ENCODE measurements at regions of chr3 and their contacts with region 1.

Region 1: DNA sequence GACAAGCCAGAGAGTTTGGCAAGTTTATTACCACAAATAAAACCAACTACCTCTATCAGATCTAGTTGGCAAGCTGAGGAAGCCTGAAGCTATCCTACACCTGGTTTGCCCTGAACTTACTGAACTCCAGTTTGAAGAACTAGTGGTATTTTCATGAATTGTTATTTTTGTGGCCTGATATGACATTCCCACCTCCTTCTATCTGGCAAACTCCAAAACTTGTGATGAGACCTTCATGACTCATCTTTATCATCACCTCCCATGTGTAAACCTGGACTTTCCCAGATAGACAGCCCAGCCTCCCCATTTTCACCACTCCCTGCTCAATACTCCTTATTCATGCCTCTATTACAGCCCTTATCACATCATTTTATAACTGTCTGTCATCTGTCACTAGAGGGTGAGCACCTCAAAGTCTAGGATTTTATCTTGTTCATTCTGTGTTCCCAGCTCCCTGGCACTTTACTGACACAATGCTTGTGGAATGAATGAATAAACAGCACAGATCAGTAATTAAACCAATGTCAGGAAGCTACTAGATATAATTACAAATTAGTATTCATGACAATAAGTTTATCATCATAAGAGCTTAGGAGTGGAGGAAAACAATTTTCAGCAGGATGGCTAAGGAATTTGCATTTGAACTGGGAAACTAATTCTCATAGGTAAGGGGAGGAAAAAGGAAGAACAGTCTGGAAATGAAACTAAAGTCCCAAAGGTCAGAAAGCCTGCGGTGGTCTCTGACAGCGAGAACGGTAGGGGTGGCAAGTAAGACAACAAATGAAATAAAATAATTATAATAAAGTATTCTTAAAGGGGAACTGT is 13.2 kb upstream of the TRANK1 start:
- DNase-seq: peak; percentile 18
- H3K4me3 Mint-ChIP-seq: no peak overlapping the region
- H3K27ac Mint-ChIP-seq: no peak overlapping the region
- H3K4me1 Mint-ChIP-seq: peaks cover 10% of the 10 kb centered on the region
- H3K27me3 Mint-ChIP-seq: no peaks in the 10 kb centered on the region

Region 2: DNA sequence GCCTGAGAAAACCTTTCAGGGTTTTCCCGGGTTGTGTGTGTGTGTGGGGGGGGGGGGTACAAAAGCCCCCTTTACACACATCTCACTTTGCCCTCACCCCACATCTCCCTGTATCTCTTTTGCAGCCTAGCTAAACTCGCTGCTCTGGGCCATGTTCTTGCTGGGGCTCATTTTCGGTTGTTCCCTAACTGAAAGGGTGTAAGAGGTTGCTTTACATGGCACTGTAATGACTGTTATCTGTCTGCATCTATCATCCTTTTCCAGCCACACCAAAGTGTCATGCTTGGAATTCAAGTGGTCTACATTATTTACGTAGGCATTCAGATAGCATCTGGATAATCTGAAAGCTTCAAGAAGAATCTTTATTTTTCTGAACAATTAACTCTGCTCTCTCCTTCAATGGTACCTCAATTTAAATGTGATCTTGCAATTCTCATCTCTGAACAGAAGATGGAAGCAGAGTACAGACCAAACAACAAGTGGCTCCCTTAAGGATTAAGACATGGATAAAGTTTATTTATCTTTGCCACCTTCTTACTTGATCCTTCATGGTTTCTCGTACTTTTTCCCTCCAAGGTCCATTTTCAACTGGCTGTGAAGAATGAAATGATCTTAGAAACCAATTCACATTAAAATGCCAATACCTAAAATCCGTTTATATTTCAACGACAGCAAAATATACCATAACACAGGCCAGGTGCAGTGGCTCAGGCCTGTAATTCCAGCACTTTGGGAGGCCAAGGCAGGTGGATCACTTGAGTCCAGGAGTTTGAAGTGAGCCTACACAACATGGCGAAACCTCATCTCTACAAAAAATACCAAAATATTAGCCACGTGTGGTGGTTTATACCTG is 228.6 kb before region 1 on chr3:
- CTCF ChIA-PET with region 1: interaction called, 13 read pairs
- POLR2A ChIA-PET with region 1: no interaction called
- intact Hi-C with region 1: loop called (anchors 1 kb)
- DNase-seq: no peak
- H3K4me3 Mint-ChIP-seq: no peak overlapping the region
- H3K27ac Mint-ChIP-seq: no peak overlapping the region
- H3K4me1 Mint-ChIP-seq: no peaks in the 10 kb centered on the region
- H3K27me3 Mint-ChIP-seq: peaks cover 6% of the 10 kb centered on the region

Region 3: DNA sequence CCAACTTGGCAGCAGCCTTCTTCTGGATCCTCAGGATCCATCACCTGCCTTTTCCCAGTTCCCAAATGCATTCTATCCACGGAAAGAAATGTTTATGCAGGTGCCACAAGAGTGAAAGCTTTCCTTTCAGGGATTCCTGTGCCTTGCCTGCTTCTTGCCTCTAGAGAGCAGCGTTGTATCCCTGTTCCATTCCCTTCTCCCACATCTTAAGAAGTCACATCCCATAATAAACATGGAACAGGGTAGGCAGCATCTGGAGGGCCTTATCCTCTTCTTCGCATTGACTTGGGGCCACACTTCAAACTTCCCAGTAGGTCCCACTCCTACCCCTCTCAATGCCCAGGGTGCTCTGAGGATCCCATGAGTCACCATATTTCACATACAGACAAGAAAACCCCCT is 121.0 kb before region 1 on chr3:
- CTCF ChIA-PET with region 1: interaction called, 19 read pairs
- POLR2A ChIA-PET with region 1: no interaction called
- intact Hi-C with region 1: loop called (anchors 2 kb)
- DNase-seq: no peak
- H3K4me3 Mint-ChIP-seq: no peak overlapping the region
- H3K27ac Mint-ChIP-seq: no peak overlapping the region
- H3K4me1 Mint-ChIP-seq: peaks cover 2% of the 10 kb centered on the region
- H3K27me3 Mint-ChIP-seq: no peaks in the 10 kb centered on the region

Region 4: DNA sequence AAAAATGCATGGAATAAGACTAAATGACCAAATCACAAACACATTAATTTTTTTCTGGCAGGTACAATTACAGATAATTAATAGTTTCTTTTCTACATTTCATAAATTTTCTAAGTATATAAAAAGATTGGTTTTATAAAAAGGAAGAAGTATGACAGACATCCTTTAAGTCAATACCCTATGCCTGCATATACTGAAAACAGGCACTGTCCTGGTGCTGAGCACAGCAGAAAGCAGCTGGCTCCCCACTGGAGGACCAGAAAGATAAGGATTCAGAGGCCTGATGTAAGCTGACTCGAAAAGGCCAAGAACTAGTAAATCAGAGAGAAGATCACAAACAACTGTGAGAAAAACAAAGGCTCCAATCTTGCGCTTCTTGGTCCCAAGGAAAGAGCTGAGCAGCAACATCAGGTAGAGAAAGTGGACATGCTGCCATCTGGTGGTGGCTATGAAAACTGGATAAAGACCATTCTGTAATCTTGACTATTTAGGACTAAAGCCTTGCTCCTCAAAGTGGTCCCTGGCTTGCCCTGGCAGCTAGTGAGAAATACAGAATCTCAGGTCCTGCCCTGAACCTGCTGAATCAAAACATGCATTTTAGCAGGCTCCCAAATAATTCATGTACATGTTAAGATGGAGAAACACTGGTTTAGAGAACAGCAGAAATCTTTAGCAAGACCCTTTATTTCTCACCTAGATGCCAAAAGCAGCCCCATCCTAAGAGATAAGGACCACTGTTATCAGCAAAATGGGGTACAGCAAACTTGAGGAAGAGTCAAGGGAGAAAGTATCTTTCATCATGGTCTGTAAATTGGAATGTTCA is 89.2 kb before region 1 on chr3:
- CTCF ChIA-PET with region 1: interaction called, 34 read pairs
- POLR2A ChIA-PET with region 1: no interaction called
- intact Hi-C with region 1: loop called (anchors 1 kb)
- DNase-seq: peak; percentile 60
- H3K4me3 Mint-ChIP-seq: no peak overlapping the region
- H3K27ac Mint-ChIP-seq: no peak overlapping the region
- H3K4me1 Mint-ChIP-seq: peaks cover 23% of the 10 kb centered on the region
- H3K27me3 Mint-ChIP-seq: no peaks in the 10 kb centered on the region

Region 5: DNA sequence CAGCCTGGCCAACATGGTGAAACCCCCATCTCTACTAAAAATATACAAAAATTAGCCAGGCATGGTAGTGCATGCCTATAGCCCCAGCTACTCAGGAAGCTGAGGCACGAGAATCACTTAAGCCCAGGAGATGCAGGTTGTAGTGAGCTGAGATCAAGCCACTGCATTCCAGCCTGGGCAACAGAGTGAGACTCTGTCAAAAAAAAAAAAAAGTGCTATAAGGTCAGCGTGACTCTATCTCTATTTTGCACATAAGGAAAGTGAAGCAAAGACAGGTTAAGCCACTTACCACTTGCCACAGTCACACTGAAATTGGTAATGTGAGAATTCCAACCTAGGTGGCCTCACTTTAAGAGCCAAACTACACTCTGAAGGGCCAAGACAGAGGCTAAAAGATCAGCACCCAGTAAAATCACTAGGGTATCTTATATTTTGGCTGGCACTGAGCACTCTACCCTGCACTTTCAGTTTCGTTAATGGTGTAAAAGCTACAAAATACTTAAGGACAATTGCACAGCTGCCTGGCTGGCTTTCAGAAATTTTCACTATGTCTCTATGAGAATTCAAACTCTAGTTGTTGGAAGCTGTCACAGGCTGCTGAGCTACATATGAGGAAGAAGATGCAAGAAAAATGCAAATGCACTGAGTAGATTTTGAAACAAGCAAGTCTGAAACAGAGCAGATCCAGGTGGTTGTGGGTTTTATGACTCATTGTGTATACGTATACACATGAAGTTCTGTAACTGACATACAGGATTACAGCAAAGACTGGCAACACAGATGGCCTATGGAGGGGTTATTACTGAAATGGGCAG is 45.9 kb before region 1 on chr3:
- CTCF ChIA-PET with region 1: interaction called, 69 read pairs
- POLR2A ChIA-PET with region 1: no interaction called
- intact Hi-C with region 1: loop called (anchors 1 kb)
- DNase-seq: peak; percentile 47
- H3K4me3 Mint-ChIP-seq: peak overlapping the region; percentile 59
- H3K27ac Mint-ChIP-seq: peak overlapping the region; percentile 81
- H3K4me1 Mint-ChIP-seq: peaks cover 41% of the 10 kb centered on the region
- H3K27me3 Mint-ChIP-seq: no peaks in the 10 kb centered on the region

Region 6: DNA sequence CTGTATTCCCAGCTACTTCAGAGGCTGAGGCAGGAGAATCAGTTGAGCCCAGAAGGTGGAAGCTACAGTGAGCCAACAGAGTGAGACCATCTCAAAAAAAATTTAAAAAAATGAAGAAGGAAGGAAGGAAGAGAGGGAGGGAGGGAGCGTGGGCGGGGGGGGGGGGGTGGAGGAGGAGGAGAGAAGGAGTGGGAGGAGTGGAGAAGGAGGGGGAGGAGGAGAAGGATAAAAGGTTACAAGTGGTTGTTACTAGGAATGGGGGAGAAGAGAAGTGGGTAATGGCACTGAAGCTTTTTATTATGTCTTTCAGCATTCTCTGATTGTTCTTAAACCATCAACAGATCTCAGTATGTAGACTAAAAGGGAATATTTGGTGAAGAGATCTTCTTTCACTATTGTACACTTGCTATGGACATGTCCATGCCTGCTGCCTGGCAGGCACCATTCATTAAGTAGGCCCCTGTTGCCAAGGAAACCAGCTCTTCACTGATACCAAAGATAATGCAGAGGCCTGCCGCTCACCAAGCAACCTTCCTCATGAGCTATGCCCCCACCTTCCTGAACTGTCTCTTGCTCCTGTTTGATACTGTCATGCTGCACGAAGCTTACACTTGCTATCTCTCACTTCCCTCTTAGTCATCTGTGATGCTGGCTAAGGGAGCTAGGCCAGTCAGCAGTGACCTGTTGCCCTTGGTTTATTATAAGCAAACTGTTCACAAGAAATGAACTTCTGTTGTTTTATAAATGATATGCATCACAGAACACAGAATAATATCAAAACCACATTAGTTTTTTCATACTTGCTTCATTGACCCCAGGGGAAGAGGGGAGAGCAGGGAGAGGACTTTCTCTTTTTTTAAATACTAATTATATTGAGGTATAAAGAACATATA is 11.7 kb after region 1 on chr3:
- CTCF ChIA-PET with region 1: interaction called, 27 read pairs
- POLR2A ChIA-PET with region 1: no interaction called
- intact Hi-C with region 1: no loop called
- DNase-seq: peak; percentile 70
- H3K4me3 Mint-ChIP-seq: no peak overlapping the region
- H3K27ac Mint-ChIP-seq: peak overlapping the region; percentile 71
- H3K4me1 Mint-ChIP-seq: peaks cover 22% of the 10 kb centered on the region
- H3K27me3 Mint-ChIP-seq: no peaks in the 10 kb centered on the region